Breast epithelium (tissue), 4 donors: ENCODE measurements at regions of chr12 and their contacts with region 1.

Region 1: DNA sequence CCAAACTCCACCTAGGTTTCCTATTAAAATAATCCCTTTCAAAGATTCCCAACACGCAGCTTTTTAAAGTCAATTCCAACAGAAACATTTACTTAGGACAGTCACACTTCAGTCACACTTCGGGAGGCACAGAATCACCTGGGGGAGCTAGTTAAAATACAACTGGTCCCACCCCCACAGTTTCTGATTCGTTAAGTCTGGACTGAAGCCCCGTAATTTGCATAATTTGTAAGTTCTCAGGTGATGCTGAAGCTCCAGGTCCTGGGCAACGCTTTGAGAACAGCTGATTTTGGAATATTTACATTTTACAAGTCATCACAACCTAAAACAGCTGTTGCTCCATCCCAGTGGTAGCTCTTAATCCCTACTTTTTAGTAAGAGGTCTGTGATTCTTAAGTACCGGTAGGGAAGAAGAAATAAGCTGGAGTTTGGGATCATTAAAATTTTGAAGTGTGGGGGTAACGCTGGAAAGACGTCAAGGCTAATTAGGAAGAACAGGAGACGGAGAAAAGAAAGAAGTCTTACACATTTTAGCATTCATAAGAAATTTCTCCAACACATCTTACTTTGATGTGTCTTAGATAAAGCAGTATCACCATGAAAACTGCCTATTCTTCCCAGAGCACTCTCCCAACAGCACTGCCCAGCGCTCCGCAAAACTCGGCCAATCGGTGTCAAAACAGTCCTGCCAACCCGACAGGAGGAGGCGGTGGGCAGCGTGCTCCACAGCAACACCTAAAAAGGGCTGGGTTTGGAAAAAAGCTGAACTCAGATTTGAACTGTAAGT is 1.1 kb downstream of the IPO8 start:
- DNase-seq: peak in 1 of 2 donors; percentile 55
- H3K4me3 ChIP-seq: peak overlapping the region; percentile 71 to 99 (median 98)
- H3K27ac ChIP-seq: peak overlapping the region; percentile 77 to 88
- H3K4me1 ChIP-seq: peaks cover 0 to 10% of the 10 kb centered on the region in 2 donors
- H3K27me3 ChIP-seq: no peaks in the 10 kb centered on the region
- CTCF ChIP-seq: no peak
- POLR2A ChIP-seq: no peak

Region 2: DNA sequence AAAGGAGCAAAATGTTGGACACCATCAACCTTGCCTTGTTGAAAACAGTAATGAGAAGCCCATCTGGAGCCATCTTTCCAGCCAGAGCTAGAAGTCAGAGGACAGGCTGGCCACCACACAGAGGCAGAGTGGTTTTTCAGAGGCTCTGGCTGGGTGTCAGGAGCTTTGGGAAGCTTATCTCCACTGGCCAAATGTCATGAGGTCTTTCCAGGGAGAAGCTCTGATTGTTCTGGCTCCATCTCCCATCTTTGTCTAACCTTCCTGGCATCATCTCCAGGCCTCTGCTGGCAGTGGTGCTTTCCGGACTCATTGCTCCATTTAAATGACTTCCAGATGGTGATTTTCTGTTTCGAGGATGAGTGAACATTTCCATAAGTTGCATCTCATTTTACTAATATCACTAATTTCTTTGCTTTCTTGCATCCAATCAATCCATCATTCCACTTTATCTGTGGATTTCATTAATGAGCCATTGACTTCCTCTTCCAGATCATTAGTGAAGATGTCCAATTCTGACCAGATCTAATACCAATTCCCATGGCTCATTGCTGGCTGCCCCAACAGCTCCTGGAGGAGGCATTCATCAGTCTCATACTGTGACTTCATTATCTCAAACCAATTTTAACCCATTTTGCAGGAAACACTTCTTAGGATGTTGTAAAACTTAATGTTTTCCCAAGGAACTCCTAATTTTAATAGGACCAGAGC is 875.5 kb before region 1 on chr12:
- intact Hi-C with region 1: loop called (anchors 5 kb)
- DNase-seq: no peak
- H3K4me3 ChIP-seq: no peak overlapping the region
- H3K27ac ChIP-seq: no peak overlapping the region
- H3K4me1 ChIP-seq: no peaks in the 10 kb centered on the region
- H3K27me3 ChIP-seq: no peaks in the 10 kb centered on the region
- CTCF ChIP-seq: no peak
- POLR2A ChIP-seq: no peak

Region 3: GRCh38 chr12:30980955-30981662 is 286.5 kb after region 1 on chr12:
- intact Hi-C with region 1: no loop called
- DNase-seq: no peak
- H3K4me3 ChIP-seq: no peak overlapping the region
- H3K27ac ChIP-seq: no peak overlapping the region
- H3K4me1 ChIP-seq: no peaks in the 10 kb centered on the region
- H3K27me3 ChIP-seq: no peaks in the 10 kb centered on the region
- CTCF ChIP-seq: no peak
- POLR2A ChIP-seq: no peak

Region 4: GRCh38 chr12:31353750-31354708 is 659.4 kb after region 1 on chr12:
- intact Hi-C with region 1: no loop called
- DNase-seq: no peak
- H3K4me3 ChIP-seq: no peak overlapping the region
- H3K27ac ChIP-seq: no peak overlapping the region
- H3K4me1 ChIP-seq: no peaks in the 10 kb centered on the region
- H3K27me3 ChIP-seq: no peaks in the 10 kb centered on the region
- CTCF ChIP-seq: no peak
- POLR2A ChIP-seq: no peak